Heart left ventricle (tissue), 16 donors: ENCODE measurements at regions of chr4 and their contacts with region 1.

Region 1: GRCh38 chr4:188550296-188550695 is 411.1 kb downstream of the TRIML1 start:
- DNase-seq: no peak
- ATAC-seq: no peak
- H3K4me3 ChIP-seq: no peak overlapping the region
- H3K27ac ChIP-seq: no peak overlapping the region
- H3K4me1 ChIP-seq: no peaks in the 10 kb centered on the region
- H3K27me3 ChIP-seq: no peaks in the 10 kb centered on the region
- CTCF ChIP-seq: no peak
- POLR2A ChIP-seq: no peak

Region 2: GRCh38 chr4:188492886-188493285 is 57.4 kb before region 1 on chr4:
- intact Hi-C with region 1: loop called in 1 of 10 experiments (anchors 2 kb)
- DNase-seq: no peak
- ATAC-seq: no peak
- H3K4me3 ChIP-seq: no peak overlapping the region
- H3K27ac ChIP-seq: no peak overlapping the region
- H3K4me1 ChIP-seq: no peaks in the 10 kb centered on the region
- H3K27me3 ChIP-seq: no peaks in the 10 kb centered on the region
- CTCF ChIP-seq: no peak
- POLR2A ChIP-seq: no peak

Region 3: DNA sequence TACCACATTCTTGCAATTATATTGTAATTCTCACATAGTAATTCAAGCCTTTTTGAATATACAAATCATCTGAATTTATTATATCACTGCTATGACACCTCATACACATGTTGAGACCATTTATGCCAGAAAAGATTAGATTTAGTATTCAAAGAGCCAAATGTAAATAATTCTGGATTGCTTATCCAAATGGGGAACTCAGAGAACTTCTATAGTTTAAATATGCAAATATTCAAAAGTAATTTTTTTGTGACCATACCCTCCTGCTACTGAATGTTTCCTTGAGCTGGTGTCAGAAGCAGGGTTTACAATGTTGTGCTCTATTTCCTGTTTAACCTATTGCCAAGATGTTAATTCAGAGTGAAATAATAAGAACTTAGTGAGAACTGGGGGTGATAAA is 38.9 kb before region 1 on chr4:
- intact Hi-C with region 1: no loop called
- DNase-seq: no peak
- ATAC-seq: no peak
- H3K4me3 ChIP-seq: no peak overlapping the region
- H3K27ac ChIP-seq: no peak overlapping the region
- H3K4me1 ChIP-seq: no peaks in the 10 kb centered on the region
- H3K27me3 ChIP-seq: no peaks in the 10 kb centered on the region
- CTCF ChIP-seq: no peak
- POLR2A ChIP-seq: no peak